GM12878 (cell line): ENCODE measurements at regions of chr6 and their contacts with region 1.

Region 1: GRCh38 chr6:16591396-16592222 is 169.7 kb downstream of the ATXN1 start:
- DNase-seq: peak; percentile 85
- ATAC-seq: peak; percentile 90
- H3K4me3 ChIP-seq: peak overlapping the region; percentile 43; the same call in 1 of the 2 replicates
- H3K27ac ChIP-seq: peak overlapping the region; percentile 89
- H3K4me1 ChIP-seq: peaks cover 31% of the 10 kb centered on the region
- H3K27me3 ChIP-seq: no peaks in the 10 kb centered on the region
- CTCF ChIP-seq: no peak
- EP300 ChIP-seq: peak; percentile 90 to 96; a peak in 3 of 4 replicates
- POLR2A ChIP-seq: no peak
- RAD21 ChIP-seq: no peak; the same call in 1 of the 2 replicates

Region 2: GRCh38 chr6:16157909-16158308 is 433.7 kb before region 1 on chr6:
- CTCF ChIA-PET with region 1: no interaction called
- POLR2A ChIA-PET with region 1: no interaction called
- RAD21 ChIA-PET with region 1: no interaction called
- SMC1A ChIA-PET with region 1: no interaction called
- in situ Hi-C with region 1: no loop called
- intact Hi-C with region 1: no loop called
- DNase-seq: no peak
- ATAC-seq: no peak
- H3K4me3 ChIP-seq: no peak overlapping the region
- H3K27ac ChIP-seq: no peak overlapping the region
- H3K4me1 ChIP-seq: peaks cover 4% of the 10 kb centered on the region
- H3K27me3 ChIP-seq: no peaks in the 10 kb centered on the region
- CTCF ChIP-seq: no peak
- EP300 ChIP-seq: no peak
- POLR2A ChIP-seq: no peak
- RAD21 ChIP-seq: no peak

Region 3: GRCh38 chr6:16409531-16410441 is 181.8 kb before region 1 on chr6:
- CTCF ChIA-PET with region 1: interaction called, 4 read pairs
- POLR2A ChIA-PET with region 1: no interaction called
- RAD21 ChIA-PET with region 1: interaction called, 10 read pairs
- SMC1A ChIA-PET with region 1: interaction called, 5 read pairs
- in situ Hi-C with region 1: no loop called
- intact Hi-C with region 1: no loop called
- DNase-seq: no peak
- ATAC-seq: peak; percentile 40
- H3K4me3 ChIP-seq: no peak overlapping the region
- H3K27ac ChIP-seq: no peak overlapping the region
- H3K4me1 ChIP-seq: peaks cover 11% of the 10 kb centered on the region
- H3K27me3 ChIP-seq: no peaks in the 10 kb centered on the region
- CTCF ChIP-seq: peak; percentile 60 to 86 (median 83)
- EP300 ChIP-seq: no peak
- POLR2A ChIP-seq: no peak
- RAD21 ChIP-seq: peak; percentile 79

Region 4: DNA sequence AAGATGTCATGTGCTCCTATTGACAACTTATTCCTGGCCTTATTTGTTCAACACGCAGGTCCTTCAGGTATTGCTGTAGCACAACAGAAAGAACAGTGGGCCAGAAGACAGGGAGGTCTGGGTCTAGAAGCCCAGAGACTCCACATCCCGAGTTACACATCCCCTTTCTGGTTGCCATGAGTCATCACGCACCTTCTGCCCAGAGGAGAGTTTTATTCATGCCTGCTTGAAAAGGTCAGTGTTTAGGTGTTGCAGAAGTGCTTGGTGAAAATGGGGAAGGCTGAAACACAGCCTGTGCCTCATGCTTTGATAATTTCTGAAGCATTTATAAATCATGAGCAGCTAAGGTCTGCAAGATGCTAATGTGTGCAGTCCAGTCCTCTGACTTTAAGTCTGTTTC is 96.8 kb before region 1 on chr6:
- CTCF ChIA-PET with region 1: no interaction called
- POLR2A ChIA-PET with region 1: no interaction called
- RAD21 ChIA-PET with region 1: interaction called, 4 read pairs
- SMC1A ChIA-PET with region 1: interaction called, 5 read pairs
- in situ Hi-C with region 1: no loop called
- intact Hi-C with region 1: loop called (anchors 5 kb)
- DNase-seq: peak; percentile 90
- ATAC-seq: peak; percentile 75
- H3K4me3 ChIP-seq: peak overlapping the region; percentile 3; the same call in 1 of the 2 replicates
- H3K27ac ChIP-seq: peak overlapping the region; percentile 85
- H3K4me1 ChIP-seq: peaks cover 60% of the 10 kb centered on the region
- H3K27me3 ChIP-seq: no peaks in the 10 kb centered on the region
- CTCF ChIP-seq: no peak
- EP300 ChIP-seq: peak in 1 of 2 experiments; percentile 87; a peak in 3 of 4 replicates
- POLR2A ChIP-seq: no peak
- RAD21 ChIP-seq: no peak

Region 5: GRCh38 chr6:16576451-16577368 is 14.9 kb before region 1 on chr6:
- CTCF ChIA-PET with region 1: interaction called, 9 read pairs
- POLR2A ChIA-PET with region 1: interaction called, 3 read pairs
- RAD21 ChIA-PET with region 1: interaction called, 11 read pairs
- SMC1A ChIA-PET with region 1: interaction called, 16 read pairs
- in situ Hi-C with region 1: no loop called
- intact Hi-C with region 1: no loop called
- DNase-seq: peak; percentile 59
- ATAC-seq: peak; percentile 99
- H3K4me3 ChIP-seq: no peak overlapping the region
- H3K27ac ChIP-seq: no peak overlapping the region
- H3K4me1 ChIP-seq: peaks cover 4% of the 10 kb centered on the region
- H3K27me3 ChIP-seq: no peaks in the 10 kb centered on the region
- CTCF ChIP-seq: no peak
- EP300 ChIP-seq: peak in 1 of 2 experiments; percentile 41; a peak in 2 of 4 replicates
- POLR2A ChIP-seq: no peak
- RAD21 ChIP-seq: no peak

Region 6: GRCh38 chr6:16635810-16636602 is 44.4 kb after region 1 on chr6:
- CTCF ChIA-PET with region 1: interaction called, 8 read pairs
- POLR2A ChIA-PET with region 1: interaction called, 3 read pairs
- RAD21 ChIA-PET with region 1: interaction called, 22 read pairs
- SMC1A ChIA-PET with region 1: interaction called, 37 read pairs
- in situ Hi-C with region 1: no loop called
- intact Hi-C with region 1: loop called (anchors 1 kb)
- DNase-seq: peak; percentile 80
- ATAC-seq: peak; percentile 81
- H3K4me3 ChIP-seq: peak overlapping the region; percentile 36; the same call in 1 of the 2 replicates
- H3K27ac ChIP-seq: peak overlapping the region; percentile 66
- H3K4me1 ChIP-seq: peaks cover 39% of the 10 kb centered on the region
- H3K27me3 ChIP-seq: no peaks in the 10 kb centered on the region
- CTCF ChIP-seq: no peak
- EP300 ChIP-seq: peak in 1 of 2 experiments; percentile 20; a peak in 2 of 4 replicates
- POLR2A ChIP-seq: no peak
- RAD21 ChIP-seq: no peak

Region 7: GRCh38 chr6:16690608-16691198 is 99.1 kb after region 1 on chr6:
- CTCF ChIA-PET with region 1: interaction called, 5 read pairs
- POLR2A ChIA-PET with region 1: interaction called, 6 read pairs
- RAD21 ChIA-PET with region 1: interaction called, 9 read pairs
- SMC1A ChIA-PET with region 1: interaction called, 4 read pairs
- in situ Hi-C with region 1: no loop called
- intact Hi-C with region 1: loop called (anchors 5 kb)
- DNase-seq: no peak
- ATAC-seq: peak; percentile 92
- H3K4me3 ChIP-seq: peak overlapping the region; percentile 13; the same call in 1 of the 2 replicates
- H3K27ac ChIP-seq: peak overlapping the region; percentile 13; the same call in 1 of the 2 replicates
- H3K4me1 ChIP-seq: peaks cover 44% of the 10 kb centered on the region
- H3K27me3 ChIP-seq: no peaks in the 10 kb centered on the region
- CTCF ChIP-seq: no peak
- EP300 ChIP-seq: peak; percentile 73 to 82
- POLR2A ChIP-seq: peak; percentile 32; the same call in 1 of the 2 replicates
- RAD21 ChIP-seq: no peak